Activated T-helper 2 cell treated with anti-CD3 and anti-CD28 coated beads, Interferon-gamma antibody, Interleukin-2, Interleukin-4, amounts not matched to agents 10 μg/mL and 5 μg/mL and 100 μg/mL, durations not matched to agents 14 hours and 24 hours and 36 hours (primary cell): ENCODE measurements at regions of chr9 and their contacts with region 1.

Region 1: GRCh38 chr9:20622330-20623020 is at the start of gene MLLT3:
- DNase-seq: peak; percentile 96
- H3K4me3 Mint-ChIP-seq: peak within 1 kb of the TSS; percentile 92
- H3K27ac Mint-ChIP-seq: peak within 1 kb of the TSS; percentile 94
- H3K4me1 Mint-ChIP-seq: peaks cover 43% of the 10 kb centered on the region
- H3K27me3 Mint-ChIP-seq: no peaks in the 10 kb centered on the region
- total RNA-seq, gene MLLT3: 22.4 and 24.9 TPM in 2 replicates

Region 2: DNA sequence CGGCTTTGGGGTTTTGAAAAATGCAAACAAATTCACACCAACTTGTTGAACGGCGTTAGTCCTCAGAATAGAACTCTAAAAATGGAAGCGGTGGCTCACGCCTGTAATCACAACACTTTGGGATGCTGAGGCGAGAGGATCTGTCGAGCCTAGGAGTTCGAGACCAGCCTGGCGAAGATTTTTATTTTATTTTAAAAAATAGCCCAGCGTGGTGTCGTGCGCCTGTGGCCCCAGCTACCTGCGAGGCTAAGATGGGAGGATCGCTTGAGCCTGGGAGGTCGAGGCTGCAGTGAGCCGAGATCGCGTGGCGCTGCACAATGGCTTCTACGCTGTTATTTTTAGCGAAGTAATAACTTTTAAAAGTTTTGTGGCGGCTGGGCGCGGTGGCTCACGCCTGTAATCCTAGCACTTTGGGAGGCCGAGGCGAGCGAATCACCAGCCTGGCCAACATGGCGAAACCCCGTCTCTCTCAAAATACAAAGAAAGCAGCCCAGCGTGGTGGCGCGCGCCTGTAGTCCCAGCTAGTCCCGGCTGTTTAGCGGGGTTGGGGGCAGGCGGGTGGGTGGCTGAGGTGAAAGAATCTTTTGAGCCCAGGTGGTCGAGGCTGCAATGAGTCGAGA is 1494.5 kb before region 1 on chr9:
- intact Hi-C with region 1: loop called (anchors 5 kb)
- DNase-seq: peak; percentile 26
- H3K4me3 Mint-ChIP-seq: peak overlapping the region; percentile 88
- H3K27ac Mint-ChIP-seq: peak overlapping the region; percentile 94
- H3K4me1 Mint-ChIP-seq: peaks cover 53% of the 10 kb centered on the region
- H3K27me3 Mint-ChIP-seq: no peaks in the 10 kb centered on the region

Region 3: DNA sequence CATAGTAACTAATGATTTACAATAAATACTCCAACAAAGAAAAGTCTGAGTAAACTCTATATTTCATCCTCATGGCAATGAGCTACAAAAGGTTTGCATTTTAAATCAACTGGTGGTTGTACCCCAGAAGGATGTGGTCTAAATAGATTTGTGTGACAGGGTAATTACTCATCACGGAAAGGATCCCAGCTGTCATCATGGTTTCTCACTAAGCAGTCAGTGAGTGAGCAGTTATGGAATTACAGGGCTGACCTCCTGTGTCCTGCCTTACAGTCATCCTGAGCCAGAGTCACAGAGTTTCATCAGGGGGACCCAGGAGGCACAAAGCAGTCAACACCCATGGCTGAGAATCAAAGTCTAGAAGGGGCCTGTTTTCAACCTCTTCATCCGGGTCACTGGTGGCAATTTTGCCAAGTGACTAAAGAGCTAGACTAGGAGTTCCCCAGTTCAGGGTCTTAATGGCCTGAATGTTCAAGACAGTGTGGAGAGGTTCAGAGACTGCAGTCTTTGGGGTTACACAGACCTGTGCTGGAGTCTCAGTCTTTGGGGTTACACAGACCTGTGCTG is 622.9 kb before region 1 on chr9:
- intact Hi-C with region 1: loop called (anchors 5 kb)
- DNase-seq: peak; percentile 55
- H3K4me3 Mint-ChIP-seq: no peak overlapping the region
- H3K27ac Mint-ChIP-seq: peak overlapping the region; percentile 91
- H3K4me1 Mint-ChIP-seq: peaks cover 51% of the 10 kb centered on the region
- H3K27me3 Mint-ChIP-seq: no peaks in the 10 kb centered on the region

Region 4: GRCh38 chr9:20356403-20357035 is 266.0 kb before region 1 on chr9:
- intact Hi-C with region 1: loop called (anchors 1 kb)
- DNase-seq: no peak
- H3K4me3 Mint-ChIP-seq: no peak overlapping the region
- H3K27ac Mint-ChIP-seq: no peak overlapping the region
- H3K4me1 Mint-ChIP-seq: peaks cover 47% of the 10 kb centered on the region
- H3K27me3 Mint-ChIP-seq: no peaks in the 10 kb centered on the region

Region 5: GRCh38 chr9:20508242-20508641 is 114.2 kb before region 1 on chr9:
- intact Hi-C with region 1: loop called (anchors 2 kb)
- DNase-seq: peak; percentile 43
- H3K4me3 Mint-ChIP-seq: no peak overlapping the region
- H3K27ac Mint-ChIP-seq: peak overlapping the region; percentile 3
- H3K4me1 Mint-ChIP-seq: peaks cover 74% of the 10 kb centered on the region
- H3K27me3 Mint-ChIP-seq: no peaks in the 10 kb centered on the region

Region 6: GRCh38 chr9:20684035-20684872 is 61.8 kb after region 1 on chr9 and contains the start of gene FOCAD:
- intact Hi-C with region 1: loop called (anchors 1 kb)
- DNase-seq: peak; percentile 96
- H3K4me3 Mint-ChIP-seq: peak within 1 kb of the TSS; percentile 87
- H3K27ac Mint-ChIP-seq: peak within 1 kb of the TSS; percentile 82
- H3K4me1 Mint-ChIP-seq: peaks cover 21% of the 10 kb centered on the region
- H3K27me3 Mint-ChIP-seq: no peaks in the 10 kb centered on the region
- total RNA-seq, gene FOCAD: 32.2 and 36.0 TPM in 2 replicates

Region 7: DNA sequence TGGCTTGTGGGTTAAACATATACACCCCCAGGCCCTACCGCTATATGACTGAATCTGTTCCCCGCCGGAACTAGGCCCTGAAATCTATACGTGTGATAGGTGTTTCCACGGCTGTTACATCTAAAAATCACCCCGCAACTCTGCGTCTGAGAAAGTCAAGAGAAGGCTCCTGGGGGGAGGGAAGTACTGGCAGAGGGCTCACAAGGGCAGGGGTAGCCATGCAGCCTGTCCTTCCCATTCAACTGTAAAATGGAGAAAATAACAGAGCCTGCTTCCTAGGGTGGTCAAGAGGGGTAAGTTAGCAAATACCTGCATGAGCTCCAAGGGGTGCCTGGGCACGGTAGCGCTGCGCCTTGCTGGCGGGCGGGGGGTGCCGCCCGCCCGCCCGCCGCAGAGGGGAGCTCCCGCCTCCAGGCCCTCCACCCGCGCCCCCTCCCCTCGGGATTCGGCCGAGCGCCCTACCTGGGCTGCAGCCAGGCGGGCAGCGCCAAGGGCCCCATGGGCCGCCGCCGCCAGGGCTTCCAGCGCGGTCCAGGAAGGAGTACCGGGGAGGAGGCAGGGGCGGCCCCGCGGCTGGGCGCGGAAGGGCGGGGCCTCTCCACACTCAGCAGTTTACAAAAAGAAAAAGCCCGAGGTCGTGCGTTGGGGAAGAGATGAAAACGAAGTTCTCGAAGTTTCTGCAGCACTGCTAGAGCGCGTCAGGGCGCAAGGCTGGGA is 408.8 kb after region 1 on chr9 and contains the start of gene HACD4:
- intact Hi-C with region 1: loop called (anchors 1 kb)
- DNase-seq: peak; percentile 69
- H3K4me3 Mint-ChIP-seq: peak within 1 kb of the TSS; percentile 67
- H3K27ac Mint-ChIP-seq: peak within 1 kb of the TSS; percentile 56
- H3K4me1 Mint-ChIP-seq: peaks cover 20% of the 10 kb centered on the region
- H3K27me3 Mint-ChIP-seq: peaks cover 3% of the 10 kb centered on the region
- total RNA-seq, gene HACD4: 2.2 and 2.4 TPM in 2 replicates